Activated T-helper 1 cell treated with anti-CD3 and anti-CD28 coated beads, Interleukin-12 subunit alpha, Interleukin-12 subunit beta, Interleukin-2, Interleukin-4 antibody, amounts not matched to agents 30 ng/mL and 10 ng/mL and 1 ng/mL, durations not matched to agents 14 hours and 24 hours and 36 hours (primary cell): ENCODE measurements at regions of chr5 and their contacts with region 1.

Region 1: GRCh38 chr5:131281133-131281867 is 17.4 kb downstream of the CDC42SE2 start:
- DNase-seq: no peak
- H3K4me3 Mint-ChIP-seq: peak overlapping the region; percentile 86
- H3K27ac Mint-ChIP-seq: peak overlapping the region; percentile 91
- H3K4me1 Mint-ChIP-seq: peaks cover 78% of the 10 kb centered on the region
- H3K27me3 Mint-ChIP-seq: peaks cover 5% of the 10 kb centered on the region

Region 2: DNA sequence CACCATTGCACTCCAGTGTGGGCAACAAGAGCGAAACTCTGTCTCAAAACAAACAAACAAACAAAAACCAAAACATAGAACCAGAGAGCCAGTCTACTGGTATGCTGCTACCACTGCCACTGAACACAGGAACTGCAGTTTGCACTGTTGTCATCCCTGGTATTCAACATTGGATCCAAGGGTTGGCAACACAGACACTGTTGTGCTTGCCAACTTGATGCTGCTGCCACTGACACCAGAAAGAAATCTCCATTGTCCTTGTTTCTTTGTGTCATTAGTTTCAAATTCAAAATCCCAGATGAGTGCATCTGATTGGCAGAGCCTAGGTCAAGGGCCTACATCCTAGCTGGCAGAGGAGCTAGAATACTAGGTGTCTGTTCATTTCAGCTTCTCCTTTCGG is 132.5 kb before region 1 on chr5:
- intact Hi-C with region 1: no loop called
- DNase-seq: no peak
- H3K4me3 Mint-ChIP-seq: no peak overlapping the region
- H3K27ac Mint-ChIP-seq: no peak overlapping the region
- H3K4me1 Mint-ChIP-seq: no peaks in the 10 kb centered on the region
- H3K27me3 Mint-ChIP-seq: no peaks in the 10 kb centered on the region

Region 3: DNA sequence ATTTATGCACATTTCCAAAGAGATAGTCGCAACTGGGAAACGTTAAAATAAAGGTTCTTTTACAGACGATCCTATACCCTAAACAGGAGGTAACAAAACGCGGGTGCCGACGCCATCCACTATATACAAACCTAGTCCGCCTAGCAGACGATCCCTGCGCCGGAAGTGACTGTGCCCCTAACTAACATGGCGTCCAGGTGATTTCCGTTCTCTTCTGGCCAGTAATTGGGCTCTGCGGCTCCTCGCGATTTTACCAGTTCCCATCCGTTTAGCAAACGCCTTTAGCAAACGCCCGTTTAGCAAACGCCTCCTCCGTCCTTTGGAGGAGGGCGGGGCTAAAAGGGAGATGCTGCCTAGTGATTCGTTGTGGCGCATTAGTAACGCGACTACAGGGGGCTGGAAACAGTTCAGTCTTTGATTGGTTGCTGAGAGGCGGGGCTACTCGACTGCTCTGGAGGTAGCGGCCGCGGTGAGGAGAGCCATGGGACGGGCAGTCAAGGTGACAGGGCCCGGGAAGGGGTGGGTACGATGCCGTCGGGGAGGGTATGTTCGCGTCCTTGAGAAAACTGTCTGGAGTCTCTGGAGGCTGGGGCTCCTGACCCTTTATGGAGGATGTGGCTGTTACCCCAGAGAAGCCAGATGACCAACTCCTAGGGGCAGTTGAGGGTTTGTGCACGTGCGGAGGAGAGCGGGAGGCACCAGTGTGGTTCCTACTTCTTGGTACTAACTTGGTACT is 110.6 kb before region 1 on chr5 and contains the start of gene LYRM7:
- intact Hi-C with region 1: loop called (anchors 1 kb)
- DNase-seq: peak; percentile 96
- H3K4me3 Mint-ChIP-seq: peak within 1 kb of the TSS; percentile 99
- H3K27ac Mint-ChIP-seq: peak within 1 kb of the TSS; percentile 98
- H3K4me1 Mint-ChIP-seq: peaks cover 51% of the 10 kb centered on the region
- H3K27me3 Mint-ChIP-seq: no peaks in the 10 kb centered on the region
- total RNA-seq, gene LYRM7: 13.7 and 15.8 TPM in 2 replicates

Region 4: GRCh38 chr5:131328536-131329285 is 47.4 kb after region 1 on chr5:
- intact Hi-C with region 1: loop called (anchors 2 kb)
- DNase-seq: no peak
- H3K4me3 Mint-ChIP-seq: no peak overlapping the region
- H3K27ac Mint-ChIP-seq: peak overlapping the region; percentile 50
- H3K4me1 Mint-ChIP-seq: peaks cover 65% of the 10 kb centered on the region
- H3K27me3 Mint-ChIP-seq: no peaks in the 10 kb centered on the region

Region 5: DNA sequence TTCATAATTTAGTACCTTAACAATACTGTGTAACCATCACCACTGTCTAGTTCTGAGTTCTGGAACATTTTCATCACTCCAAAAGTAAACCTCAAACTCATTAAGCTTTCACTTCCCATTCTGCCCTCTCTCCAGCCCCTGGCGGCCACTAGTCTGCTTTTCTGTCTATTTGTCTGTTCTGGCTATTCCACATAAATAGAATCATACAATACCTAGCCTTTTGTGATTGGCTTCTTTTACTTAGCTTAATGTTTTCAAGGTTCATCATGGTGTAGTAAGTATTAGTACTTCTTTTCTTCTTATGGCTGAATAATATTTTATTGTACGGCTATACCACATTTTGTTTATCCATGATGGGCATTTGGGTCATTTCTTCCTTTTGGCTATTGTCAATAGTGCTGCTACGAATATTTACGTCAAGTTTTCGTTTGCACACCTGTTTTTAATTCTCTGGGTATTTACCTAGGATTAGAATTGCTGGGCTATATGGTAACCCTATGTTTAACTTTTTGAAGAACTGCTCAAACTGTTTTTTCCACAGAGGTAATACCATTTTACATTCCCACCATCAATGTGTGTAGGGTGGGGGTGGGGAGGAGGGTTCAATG is 215.2 kb after region 1 on chr5:
- intact Hi-C with region 1: no loop called
- DNase-seq: no peak
- H3K4me3 Mint-ChIP-seq: no peak overlapping the region
- H3K27ac Mint-ChIP-seq: no peak overlapping the region
- H3K4me1 Mint-ChIP-seq: peaks cover 6% of the 10 kb centered on the region
- H3K27me3 Mint-ChIP-seq: no peaks in the 10 kb centered on the region